ENCODE measurements at regions of chr3 and their contacts with region 1.

Region 1: GRCh38 chr3:52536369-52537164 is at the start of gene UQCC5:
- DNase-seq: peak; percentile 99
- ATAC-seq: peak; percentile 91
- H3K4me3 Mint-ChIP-seq: peak within 1 kb of the TSS; percentile 100
- H3K27ac Mint-ChIP-seq: peak within 1 kb of the TSS; percentile 99
- H3K4me1 Mint-ChIP-seq: peaks cover 49% of the 10 kb centered on the region
- H3K27me3 Mint-ChIP-seq: no peaks in the 10 kb centered on the region
- total RNA-seq, gene UQCC5: 12.0 to 12.7 TPM

Region 2: DNA sequence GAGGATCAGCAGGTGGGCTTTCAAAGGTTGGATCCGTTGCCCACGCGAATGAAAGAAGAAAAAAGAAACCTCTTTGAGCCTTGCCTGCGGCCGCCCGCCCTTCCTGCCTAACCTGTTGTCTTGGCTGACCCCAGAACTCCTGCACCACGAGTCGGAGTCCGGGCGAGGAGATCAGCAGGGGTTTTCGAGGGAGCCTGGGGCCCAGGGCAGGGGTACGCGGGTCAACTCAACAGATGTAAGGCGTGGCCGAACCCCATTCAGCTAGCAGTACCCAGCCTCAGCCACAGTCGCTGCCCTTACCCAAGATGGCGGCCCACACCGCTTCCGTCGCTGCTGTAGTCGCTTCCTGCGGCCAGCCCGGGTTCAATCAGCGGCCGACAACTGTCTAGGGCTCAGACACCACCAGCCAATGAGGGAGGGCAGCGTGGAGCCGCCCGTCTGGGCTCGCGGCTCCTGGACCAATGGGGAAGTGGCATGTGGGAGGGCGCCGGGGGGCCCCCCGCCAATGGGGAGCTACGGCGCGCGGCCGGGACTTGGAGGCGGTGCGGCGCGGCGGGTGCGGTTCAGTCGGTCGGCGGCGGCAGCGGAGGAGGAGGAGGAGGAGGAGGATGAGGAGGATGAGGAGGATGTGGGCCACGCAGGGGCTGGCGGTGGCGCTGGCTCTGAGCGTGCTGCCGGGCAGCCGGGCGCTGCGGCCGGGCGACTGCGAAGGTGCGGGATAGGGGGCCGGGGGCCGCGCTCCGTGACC is 1151.7 kb before region 1 on chr3 and contains the start of gene MANF:
- CTCF ChIA-PET with region 1: no interaction called
- POLR2A ChIA-PET with region 1: no interaction called
- intact Hi-C with region 1: loop called in 1 of 2 experiments (anchors 10 kb)
- DNase-seq: peak; percentile 99
- ATAC-seq: peak; percentile 97
- H3K4me3 Mint-ChIP-seq: peak within 1 kb of the TSS; percentile 93
- H3K27ac Mint-ChIP-seq: peak within 1 kb of the TSS; percentile 99
- H3K4me1 Mint-ChIP-seq: peaks cover 46% of the 10 kb centered on the region
- H3K27me3 Mint-ChIP-seq: no peaks in the 10 kb centered on the region
- total RNA-seq, gene MANF: 124 to 129 TPM

Region 3: GRCh38 chr3:52108302-52109232 is 428.0 kb before region 1 on chr3:
- CTCF ChIA-PET with region 1: no interaction called
- POLR2A ChIA-PET with region 1: no interaction called
- intact Hi-C with region 1: no loop called
- DNase-seq: no peak
- ATAC-seq: no peak
- H3K4me3 Mint-ChIP-seq: no peak overlapping the region
- H3K27ac Mint-ChIP-seq: no peak overlapping the region
- H3K4me1 Mint-ChIP-seq: no peaks in the 10 kb centered on the region
- H3K27me3 Mint-ChIP-seq: no peaks in the 10 kb centered on the region

Measured in activated CD4-positive, alpha-beta T cell treated with anti-CD3 and anti-CD28 coated beads for 36 hours (primary cell).